Dorsolateral prefrontal cortex (tissue), 120 donors: ENCODE measurements at regions of chr6 and their contacts with region 1.

Region 1: DNA sequence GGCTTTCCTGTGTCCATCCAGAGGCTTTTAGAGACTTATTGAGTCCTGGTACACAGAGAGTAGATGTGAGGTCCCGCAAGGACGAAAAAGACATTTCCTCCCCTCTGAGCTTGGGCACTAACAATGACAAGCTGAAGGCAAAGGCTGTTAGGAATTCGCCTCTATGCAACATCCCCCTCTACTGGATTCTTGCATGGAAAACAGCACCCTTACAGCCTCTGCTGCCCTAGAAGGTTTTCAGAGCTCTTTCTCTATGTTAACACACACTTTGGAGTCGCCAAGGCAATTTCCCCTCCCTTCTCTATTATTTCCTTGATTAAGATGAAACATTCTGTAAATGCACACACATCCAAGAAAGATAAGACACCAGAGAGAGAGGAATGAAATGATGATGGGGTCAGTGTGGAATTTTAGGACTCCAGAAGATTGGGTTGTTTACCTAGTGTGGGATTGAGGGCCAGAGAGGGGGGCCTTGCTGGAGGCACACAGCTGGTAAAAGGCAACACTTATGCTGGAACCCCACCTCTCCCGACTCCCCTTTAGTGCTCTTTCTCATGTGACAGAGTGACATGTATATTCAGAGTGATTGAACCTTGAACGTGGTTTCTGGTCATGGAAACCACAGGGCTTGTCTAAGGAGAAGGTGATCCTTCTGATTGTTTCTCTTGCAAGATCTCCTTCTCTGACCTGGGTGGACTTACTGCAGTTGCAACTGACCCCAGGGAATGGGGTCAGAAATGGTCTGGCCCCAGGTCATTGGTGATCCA is 300.7 kb downstream of the CLIC5 start:
- DNase-seq: peak in 4 of 10 donors; percentile 7 to 69 (median 25)
- H3K4me3 ChIP-seq: peak overlapping the region in 9 of 59 donors; percentile 0 to 21 (median 13)
- H3K27ac ChIP-seq: peak overlapping the region in 5 of 59 donors; percentile 12 to 57 (median 39)
- H3K27me3 ChIP-seq: peaks cover 0 to 8% (median 0%) of the 10 kb centered on the region in 45 donors
- CTCF ChIP-seq: peak; percentile 54 to 94 (median 80)

Region 2: DNA sequence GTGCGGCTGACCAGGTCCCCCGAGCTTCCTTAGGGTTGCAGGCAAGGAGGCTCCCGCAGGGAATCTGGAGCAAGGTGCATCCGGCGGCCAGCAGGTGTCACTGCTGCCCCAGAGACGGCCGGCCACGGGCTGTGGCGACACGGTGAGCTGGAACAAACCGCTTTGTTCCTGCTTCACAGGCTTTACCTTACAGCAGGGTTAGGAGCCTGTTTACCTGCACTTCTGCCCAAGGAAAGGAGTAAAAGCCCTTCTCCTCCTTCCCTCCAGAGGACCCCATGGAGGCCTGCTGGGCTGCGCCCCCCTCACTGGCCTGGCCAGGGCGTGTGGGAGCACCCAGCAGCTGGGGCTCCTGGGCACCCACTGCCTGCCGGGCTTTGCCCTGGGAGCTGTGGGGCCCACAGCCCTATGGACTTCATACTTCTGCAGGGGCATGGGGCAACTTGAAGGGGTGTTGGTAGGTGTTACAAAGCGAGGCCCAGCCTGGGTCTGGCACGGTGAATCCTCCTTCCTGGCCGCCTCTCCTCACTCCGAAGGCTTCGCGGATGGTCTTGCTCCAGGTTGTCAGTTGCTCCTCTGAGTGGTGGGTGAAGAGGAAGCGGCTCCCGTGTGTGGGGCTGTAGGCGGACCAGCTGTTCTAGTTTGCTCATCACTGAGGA is 1239.0 kb before region 1 on chr6:
- intact Hi-C with region 1: loop called (anchors 10 kb)
- DNase-seq: peak; percentile 71 to 89 (median 81)
- H3K4me3 ChIP-seq: peak overlapping the region in 38 of 59 donors; percentile 11 to 48 (median 28)
- H3K27ac ChIP-seq: peak overlapping the region in 5 of 59 donors; percentile 34 to 65 (median 49)
- H3K27me3 ChIP-seq: no peaks in the 10 kb centered on the region
- CTCF ChIP-seq: peak; percentile 72 to 99 (median 94)

Region 3: DNA sequence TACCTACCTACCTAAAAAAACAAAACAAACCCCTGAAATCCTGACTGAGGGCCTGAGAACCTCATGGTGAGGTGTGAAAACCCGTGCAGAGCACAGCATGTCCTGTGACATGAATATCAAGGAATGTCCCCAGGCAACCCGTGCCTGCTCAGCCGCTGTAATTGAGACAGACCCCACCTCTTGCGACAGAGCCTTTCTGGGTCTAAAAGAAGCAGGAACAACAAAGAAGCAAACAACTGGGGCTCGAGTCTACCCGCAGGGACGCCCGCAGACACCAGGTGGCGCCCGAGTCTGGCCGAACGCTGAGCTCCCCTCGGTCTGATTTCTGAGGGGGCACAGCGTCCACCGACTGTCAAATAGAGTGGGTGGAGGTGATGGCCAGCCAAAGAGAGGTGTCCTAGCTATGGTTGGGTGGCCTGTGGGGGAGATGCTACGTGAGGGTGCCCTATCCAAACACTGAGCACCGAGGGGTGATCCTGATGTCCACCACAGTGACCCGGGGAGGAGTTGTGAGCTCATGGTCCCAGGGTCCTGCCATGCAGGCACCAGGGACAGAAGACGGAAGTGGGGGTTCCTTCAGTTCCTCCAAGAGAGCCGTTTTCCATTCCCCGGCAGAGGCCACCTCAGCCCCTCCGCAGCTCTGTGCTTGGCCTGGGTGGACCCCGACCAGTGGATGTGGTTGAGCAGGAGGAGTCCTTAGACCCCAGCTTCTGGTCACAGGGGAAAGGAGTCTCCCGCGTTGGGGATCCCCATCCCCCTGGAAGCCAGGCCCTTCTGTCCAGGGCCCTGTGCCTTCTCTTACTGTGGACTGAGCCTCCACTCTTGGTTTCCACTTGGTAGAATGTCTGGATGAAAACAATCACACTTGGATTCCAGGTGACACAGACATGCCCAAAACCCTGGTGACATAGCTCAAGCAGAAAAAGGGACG is 1059.2 kb before region 1 on chr6:
- intact Hi-C with region 1: loop called (anchors 1 to 5 kb)
- DNase-seq: peak in 9 of 10 donors; percentile 47 to 83 (median 74)
- H3K4me3 ChIP-seq: peak overlapping the region in 3 of 59 donors; percentile 10 to 21 (median 13)
- H3K27ac ChIP-seq: no peak overlapping the region
- H3K27me3 ChIP-seq: no peaks in the 10 kb centered on the region
- CTCF ChIP-seq: peak; percentile 81 to 99 (median 94)